ENCODE measurements at regions of chr15 and their contacts with region 1.

Region 1: DNA sequence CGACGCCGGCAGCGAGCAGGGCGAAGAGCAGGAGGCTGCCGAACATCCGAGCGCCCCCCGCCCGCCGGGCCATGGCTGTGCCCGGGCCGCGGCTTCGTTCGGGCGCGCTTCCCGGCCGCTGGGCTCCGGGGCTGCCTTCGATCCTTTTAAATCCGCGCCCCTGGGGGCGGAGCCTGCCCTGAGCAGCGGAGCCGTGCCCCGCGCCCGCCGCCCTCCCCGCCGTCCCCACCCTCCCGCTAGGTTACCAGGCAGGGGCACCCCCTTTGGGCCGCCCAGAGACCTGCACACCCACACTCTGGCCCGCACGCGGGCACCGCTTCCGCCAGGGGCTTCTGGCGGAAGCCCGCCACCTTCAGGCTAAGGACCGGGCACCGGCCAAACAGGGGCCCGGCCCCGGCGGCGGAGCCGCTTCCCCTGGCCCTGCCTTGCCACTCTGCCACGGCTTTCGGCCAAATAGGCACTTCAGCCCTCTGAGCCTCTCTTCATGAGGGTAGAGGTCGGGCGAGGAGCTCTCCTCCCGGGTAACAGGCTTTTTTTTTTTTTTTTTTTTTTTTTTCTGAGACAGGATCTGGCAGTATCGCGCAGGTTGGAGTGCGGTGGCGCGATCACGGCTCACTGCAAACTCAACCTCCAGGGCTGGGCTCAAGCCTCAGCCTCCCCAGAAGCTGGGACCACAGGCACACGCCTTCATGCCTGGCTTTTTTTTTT is at the start of gene NMB:
- DNase-seq: peak; percentile 93
- H3K4me3 Mint-ChIP-seq: peak within 1 kb of the TSS; percentile 81
- H3K27ac Mint-ChIP-seq: peak within 1 kb of the TSS; percentile 87
- H3K4me1 Mint-ChIP-seq: peaks cover 21% of the 10 kb centered on the region
- H3K27me3 Mint-ChIP-seq: no peaks in the 10 kb centered on the region
- total RNA-seq, gene NMB: 2.8 and 3.7 TPM in 2 replicates

Region 2: GRCh38 chr15:84633311-84634227 is 24.7 kb before region 1 on chr15:
- intact Hi-C with region 1: loop called (anchors 1 kb)
- DNase-seq: peak; percentile 91
- H3K4me3 Mint-ChIP-seq: peak overlapping the region; percentile 97
- H3K27ac Mint-ChIP-seq: peak overlapping the region; percentile 95
- H3K4me1 Mint-ChIP-seq: peaks cover 33% of the 10 kb centered on the region
- H3K27me3 Mint-ChIP-seq: no peaks in the 10 kb centered on the region

Region 3: DNA sequence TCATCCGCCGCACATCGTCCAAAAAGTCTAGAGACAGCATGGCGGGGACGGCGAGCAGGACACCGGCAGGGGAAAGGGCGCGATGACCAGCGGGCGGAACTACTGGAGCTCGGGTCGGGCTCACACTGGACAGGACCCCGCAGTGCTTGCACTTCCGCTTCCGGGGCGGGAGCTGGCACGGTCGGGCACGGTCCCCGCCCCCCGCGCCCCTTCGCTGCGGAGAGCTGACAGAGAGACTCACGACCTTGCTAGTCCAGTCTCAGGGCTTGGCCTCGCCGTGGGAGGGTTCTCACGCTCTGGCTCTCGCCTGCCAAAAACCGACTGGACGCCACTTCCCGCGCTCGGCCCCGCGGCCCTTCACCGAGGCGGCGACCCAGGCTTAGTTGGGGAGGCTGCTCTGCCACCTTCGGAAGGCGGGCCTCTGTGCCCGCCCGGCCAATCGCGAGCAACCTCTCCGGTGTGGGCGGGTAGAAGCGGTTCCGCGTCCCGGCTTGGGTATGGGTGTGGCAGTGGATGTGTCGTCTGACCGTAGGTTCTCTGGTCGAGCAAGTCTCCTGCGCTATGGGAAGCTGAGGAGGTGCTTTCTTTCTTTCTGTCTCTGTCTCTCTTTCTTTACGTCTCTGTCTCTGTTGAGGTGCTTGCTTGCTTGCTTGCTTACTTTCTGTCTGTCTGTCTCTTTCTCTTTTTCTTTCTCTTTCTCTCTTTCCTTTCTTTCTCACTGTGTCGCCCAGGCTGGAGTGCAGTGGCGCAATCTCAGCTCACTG is 58.0 kb after region 1 on chr15 and contains the start of gene SEC11A:
- intact Hi-C with region 1: loop called (anchors 1 kb)
- DNase-seq: peak; percentile 97
- H3K4me3 Mint-ChIP-seq: peak within 1 kb of the TSS; percentile 89
- H3K27ac Mint-ChIP-seq: peak within 1 kb of the TSS; percentile 91
- H3K4me1 Mint-ChIP-seq: peaks cover 42% of the 10 kb centered on the region
- H3K27me3 Mint-ChIP-seq: no peaks in the 10 kb centered on the region
- total RNA-seq, gene SEC11A: 101 and 108 TPM in 2 replicates

Region 4: DNA sequence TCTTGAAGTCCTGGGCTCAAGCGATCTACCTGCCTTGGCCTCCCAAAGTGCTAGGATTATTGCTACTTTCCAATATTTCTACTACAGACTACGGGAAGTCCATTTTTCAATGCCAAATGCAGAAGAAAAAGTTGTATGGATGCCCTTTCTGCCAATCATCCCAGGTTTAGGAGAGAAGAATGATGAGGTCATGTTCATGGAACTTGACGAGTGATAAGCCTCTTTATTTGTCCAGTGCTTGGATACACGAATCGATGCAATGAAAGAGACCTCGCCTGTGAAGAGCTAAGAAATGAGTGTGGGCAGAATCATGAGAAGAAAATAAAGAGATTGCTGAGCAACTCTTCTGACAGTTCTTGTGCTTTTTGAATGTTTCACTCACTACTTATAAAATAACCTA is 225.2 kb after region 1 on chr15:
- intact Hi-C with region 1: loop called (anchors 1 kb)
- DNase-seq: no peak
- H3K4me3 Mint-ChIP-seq: no peak overlapping the region
- H3K27ac Mint-ChIP-seq: no peak overlapping the region
- H3K4me1 Mint-ChIP-seq: no peaks in the 10 kb centered on the region
- H3K27me3 Mint-ChIP-seq: peaks cover 5% of the 10 kb centered on the region

Measured in activated CD4-positive, alpha-beta T cell treated with anti-CD3 and anti-CD28 coated beads, Interleukin-2, amount 10 ng/mL, durations not matched to agents 24 days and 14 days (primary cell).